Adrenal gland (tissue), 19 donors: ENCODE measurements at regions of chr1 and their contacts with region 1.

Region 1: DNA sequence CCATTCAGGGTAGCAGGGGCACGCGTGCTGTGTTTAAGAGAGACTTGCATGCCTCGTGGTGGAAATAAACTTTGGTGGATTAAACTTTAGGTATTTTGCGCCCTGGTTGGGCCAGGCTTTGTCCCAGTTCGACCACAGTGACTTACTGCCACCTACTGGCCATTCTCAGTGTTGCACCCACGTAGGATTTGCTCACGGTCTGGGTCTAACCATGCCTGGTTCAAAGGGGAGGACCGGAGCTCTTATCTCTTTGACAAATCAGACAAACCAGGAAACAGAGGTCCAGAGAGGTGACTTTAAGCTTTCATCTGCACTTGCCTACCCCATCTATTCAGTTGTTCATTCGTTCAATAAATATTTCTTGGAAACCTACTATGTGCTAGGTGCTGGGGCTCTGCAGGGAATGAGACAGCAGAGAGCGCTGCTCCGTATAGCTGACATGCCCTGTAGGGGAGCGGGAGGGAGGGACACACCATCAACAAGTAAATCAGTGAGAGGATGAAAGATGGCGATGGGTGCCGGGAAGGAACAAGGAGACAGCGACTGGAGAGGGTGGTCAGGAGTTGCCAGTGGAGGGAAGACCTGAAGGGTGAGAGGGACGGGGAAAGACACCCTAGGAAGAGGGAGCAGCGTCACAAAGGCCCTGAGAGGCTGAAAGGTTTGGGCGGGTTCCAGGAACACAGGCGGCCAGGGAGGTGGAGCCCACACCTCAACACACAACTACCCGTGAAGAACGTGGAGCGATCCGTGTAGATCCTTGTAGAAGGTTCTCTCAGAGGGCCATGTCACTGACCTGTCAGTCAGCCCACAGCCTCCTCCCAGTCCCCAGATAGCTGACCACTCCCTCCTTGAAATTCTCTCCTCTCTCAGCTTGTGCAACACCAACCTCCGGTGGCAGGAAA is 27.2 kb upstream of the TINAGL1 start:
- DNase-seq: peak; percentile 81 to 98 (median 92)
- H3K4me3 ChIP-seq: peak overlapping the region in 1 of 4 donors; percentile 16
- H3K27ac ChIP-seq: peak overlapping the region in 2 of 5 donors; percentile 16 to 22
- H3K4me1 ChIP-seq: peaks cover 6 to 17% of the 10 kb centered on the region in 2 donors
- H3K27me3 ChIP-seq: no peaks in the 10 kb centered on the region
- CTCF ChIP-seq: peak; percentile 96 to 98 (median 97)
- POLR2A ChIP-seq: peak in 1 of 2 donors; percentile 11

Region 2: GRCh38 chr1:31182352-31182751 is 366.8 kb before region 1 on chr1:
- intact Hi-C with region 1: loop called in 1 of 2 experiments (anchors 10 kb)
- DNase-seq: peak; percentile 84 to 93 (median 90)
- H3K4me3 ChIP-seq: peak overlapping the region in 1 of 4 donors; percentile 39
- H3K27ac ChIP-seq: peak overlapping the region in 2 of 5 donors; percentile 15 to 54
- H3K4me1 ChIP-seq: peaks cover 10 to 15% of the 10 kb centered on the region in 2 donors
- H3K27me3 ChIP-seq: no peaks in the 10 kb centered on the region
- CTCF ChIP-seq: peak in 5 of 6 experiments; percentile 29 to 46 (median 44)
- POLR2A ChIP-seq: no peak

Region 3: GRCh38 chr1:31327381-31327780 is 221.8 kb before region 1 on chr1:
- intact Hi-C with region 1: no loop called
- DNase-seq: no peak
- H3K4me3 ChIP-seq: no peak overlapping the region
- H3K27ac ChIP-seq: no peak overlapping the region
- H3K4me1 ChIP-seq: no peaks in the 10 kb centered on the region
- H3K27me3 ChIP-seq: no peaks in the 10 kb centered on the region
- CTCF ChIP-seq: no peak
- POLR2A ChIP-seq: no peak

Region 4: GRCh38 chr1:31368611-31369107 is 180.5 kb before region 1 on chr1:
- intact Hi-C with region 1: no loop called
- DNase-seq: peak; percentile 67 to 88 (median 85)
- H3K4me3 ChIP-seq: no peak overlapping the region
- H3K27ac ChIP-seq: peak overlapping the region in 4 of 5 donors; percentile 23 to 82 (median 52)
- H3K4me1 ChIP-seq: peaks cover 53 to 65% of the 10 kb centered on the region in 2 donors
- H3K27me3 ChIP-seq: no peaks in the 10 kb centered on the region
- CTCF ChIP-seq: no peak
- POLR2A ChIP-seq: peak in 1 of 2 donors; percentile 59

Region 5: DNA sequence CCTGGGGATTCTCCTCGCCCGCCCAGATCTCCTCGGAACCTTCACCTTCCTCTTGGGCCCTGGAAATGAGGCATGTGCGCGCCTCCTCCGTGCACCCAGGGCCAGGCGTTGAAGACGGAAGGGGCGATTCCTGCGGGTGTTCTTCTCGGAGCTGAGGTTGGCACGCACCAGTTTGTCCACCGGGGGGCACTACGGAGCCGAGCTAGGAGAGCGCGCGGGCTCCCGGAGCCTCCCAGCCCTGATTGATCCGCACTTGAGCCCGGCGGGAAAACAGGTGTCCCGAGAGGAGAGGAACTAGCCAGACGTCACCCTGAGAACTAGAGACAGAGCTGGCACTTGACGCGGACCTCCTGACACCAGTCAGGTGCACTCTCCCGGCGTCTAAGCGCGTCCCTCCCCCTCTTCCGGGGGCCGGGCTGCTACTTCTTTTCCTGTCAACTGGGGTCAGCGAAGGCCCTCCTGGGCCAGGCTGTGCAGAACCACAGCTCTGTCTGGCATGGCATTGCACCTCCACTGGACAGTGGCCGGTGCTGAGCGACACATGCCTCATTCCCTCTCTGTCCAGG is 154.4 kb before region 1 on chr1:
- intact Hi-C with region 1: loop called in 1 of 2 experiments (anchors 5 kb)
- DNase-seq: peak; percentile 83 to 94 (median 91)
- H3K4me3 ChIP-seq: peak overlapping the region in 1 of 4 donors; percentile 25
- H3K27ac ChIP-seq: no peak overlapping the region
- H3K4me1 ChIP-seq: peaks cover 4 to 8% of the 10 kb centered on the region in 2 donors
- H3K27me3 ChIP-seq: no peaks in the 10 kb centered on the region
- CTCF ChIP-seq: peak; percentile 82 to 92 (median 88)
- POLR2A ChIP-seq: no peak

Region 6: DNA sequence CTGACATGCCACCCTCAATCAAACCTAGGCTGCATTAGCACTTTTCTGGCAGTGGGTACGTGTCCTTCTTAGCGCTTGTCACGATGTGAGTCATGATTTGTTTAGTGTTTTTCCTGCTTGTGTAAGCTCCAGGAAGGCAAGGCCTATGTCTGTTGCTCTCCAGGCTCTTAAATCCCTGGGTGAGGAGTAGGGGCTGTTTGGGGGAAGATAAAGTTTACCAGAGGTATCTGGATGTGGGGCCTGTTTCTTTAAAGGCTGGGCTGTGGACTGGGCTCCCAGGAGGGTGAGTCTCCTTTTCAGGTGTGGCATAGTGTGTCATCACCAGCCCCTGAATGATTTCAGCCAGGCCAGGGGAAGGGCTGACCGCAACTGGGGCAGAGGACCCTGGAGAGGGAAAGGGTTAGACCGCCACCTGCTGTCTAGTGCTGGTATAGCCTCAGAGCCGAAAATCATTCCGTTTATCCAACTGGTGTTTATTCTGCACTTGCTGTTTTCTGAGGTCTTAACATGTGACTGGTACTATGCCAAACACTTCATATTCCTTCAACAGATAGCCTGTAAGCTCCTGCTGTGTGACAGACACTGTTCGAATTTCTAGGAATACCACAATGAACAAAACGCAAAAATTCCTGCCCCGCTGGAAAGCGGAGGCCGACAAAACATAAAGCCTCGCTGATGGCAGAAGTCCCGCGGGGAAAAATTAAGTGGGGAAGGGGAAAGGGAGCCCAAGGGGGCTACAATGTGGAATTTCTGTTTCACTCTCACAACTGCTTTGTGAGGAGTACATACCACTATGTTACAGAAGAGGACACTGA is 126.4 kb before region 1 on chr1:
- intact Hi-C with region 1: loop called in 1 of 2 experiments (anchors 10 kb)
- DNase-seq: peak; percentile 74 to 91 (median 82)
- H3K4me3 ChIP-seq: no peak overlapping the region
- H3K27ac ChIP-seq: peak overlapping the region in 4 of 5 donors; percentile 13 to 60 (median 57)
- H3K4me1 ChIP-seq: no peaks in the 10 kb centered on the region
- H3K27me3 ChIP-seq: no peaks in the 10 kb centered on the region
- CTCF ChIP-seq: peak; percentile 86 to 96 (median 94)
- POLR2A ChIP-seq: no peak

Region 7: DNA sequence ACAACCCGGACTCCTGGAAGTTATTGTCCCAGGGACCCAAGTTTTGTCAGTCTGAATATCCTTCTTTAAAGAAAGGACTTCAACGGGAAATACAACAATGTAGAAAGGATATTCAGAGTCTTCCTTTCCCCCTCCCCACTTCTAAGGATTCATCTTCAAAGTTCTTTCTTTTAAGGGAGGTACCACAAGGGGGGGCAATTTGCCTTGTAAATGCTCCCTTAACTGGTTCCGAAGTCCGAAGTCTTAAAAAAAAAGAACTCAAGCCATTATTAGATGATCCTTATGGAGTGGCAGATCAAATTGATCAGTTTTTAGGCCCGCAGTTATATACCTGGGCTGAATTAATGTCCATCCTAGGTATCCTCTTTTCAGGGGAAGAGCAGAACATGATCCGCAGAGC is 89.1 kb before region 1 on chr1:
- intact Hi-C with region 1: loop called (anchors 5 kb)
- DNase-seq: peak in 1 of 7 donors; percentile 41
- H3K4me3 ChIP-seq: no peak overlapping the region
- H3K27ac ChIP-seq: no peak overlapping the region
- H3K4me1 ChIP-seq: no peaks in the 10 kb centered on the region
- H3K27me3 ChIP-seq: no peaks in the 10 kb centered on the region
- CTCF ChIP-seq: peak; percentile 7 to 49 (median 34)
- POLR2A ChIP-seq: no peak